ENCODE measurements at regions of chr20 and their contacts with region 1.

Region 1: DNA sequence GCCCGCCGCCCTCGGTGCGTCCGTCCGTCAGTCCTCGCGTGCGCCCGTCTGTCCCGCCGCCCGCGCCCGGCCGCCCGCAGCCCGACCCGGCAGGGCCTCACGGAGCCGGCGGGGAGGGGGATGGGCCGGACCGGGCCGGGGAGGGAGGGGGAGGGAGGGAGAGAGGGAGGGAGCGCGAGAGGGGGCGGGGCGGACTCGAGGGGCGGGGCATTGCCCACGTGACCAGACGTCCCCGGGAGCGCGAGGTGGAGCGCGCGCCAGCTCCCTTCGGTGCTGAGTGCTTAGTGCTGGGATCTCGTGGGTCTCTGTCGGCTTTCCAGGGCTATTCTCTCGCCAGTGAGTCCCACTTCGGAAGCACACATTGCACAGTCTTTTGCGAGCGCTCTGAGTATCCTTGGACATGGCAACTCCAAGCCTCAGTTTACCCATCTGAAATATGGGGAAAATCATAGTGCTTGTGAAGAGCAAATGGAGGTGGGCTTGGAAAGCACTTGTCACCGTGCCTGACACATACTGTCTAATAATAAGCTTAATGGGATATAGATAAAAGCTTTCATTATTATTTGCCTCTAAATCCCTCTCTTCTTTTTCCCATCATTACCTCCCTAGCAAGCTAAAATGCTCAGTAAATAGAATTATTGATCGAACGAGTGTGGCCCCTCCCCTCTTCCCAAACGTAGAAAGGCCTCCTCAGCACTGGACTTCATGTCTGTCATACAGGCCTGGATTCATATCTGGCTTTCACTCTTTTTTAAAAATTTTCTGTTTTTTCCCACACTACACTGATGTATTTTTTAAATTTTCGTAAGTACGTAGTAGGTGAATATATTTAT is at the start of gene NCOA6:
- DNase-seq: peak; percentile 68
- H3K4me3 Mint-ChIP-seq: peak within 1 kb of the TSS; percentile 97
- H3K27ac Mint-ChIP-seq: peak within 1 kb of the TSS; percentile 91
- H3K4me1 Mint-ChIP-seq: peaks cover 30% of the 10 kb centered on the region
- H3K27me3 Mint-ChIP-seq: peaks cover 13% of the 10 kb centered on the region
- total RNA-seq, gene NCOA6: 25.5 and 29.1 TPM in 2 replicates

Region 2: GRCh38 chr20:34516247-34517113 is 309.3 kb before region 1 on chr20 and contains the start of gene DYNLRB1:
- intact Hi-C with region 1: loop called (anchors 1 kb)
- DNase-seq: peak; percentile 93
- H3K4me3 Mint-ChIP-seq: peak within 1 kb of the TSS; percentile 95
- H3K27ac Mint-ChIP-seq: peak within 1 kb of the TSS; percentile 96
- H3K4me1 Mint-ChIP-seq: peaks cover 35% of the 10 kb centered on the region
- H3K27me3 Mint-ChIP-seq: no peaks in the 10 kb centered on the region
- total RNA-seq, gene DYNLRB1: 92.0 and 104 TPM in 2 replicates

Region 3: DNA sequence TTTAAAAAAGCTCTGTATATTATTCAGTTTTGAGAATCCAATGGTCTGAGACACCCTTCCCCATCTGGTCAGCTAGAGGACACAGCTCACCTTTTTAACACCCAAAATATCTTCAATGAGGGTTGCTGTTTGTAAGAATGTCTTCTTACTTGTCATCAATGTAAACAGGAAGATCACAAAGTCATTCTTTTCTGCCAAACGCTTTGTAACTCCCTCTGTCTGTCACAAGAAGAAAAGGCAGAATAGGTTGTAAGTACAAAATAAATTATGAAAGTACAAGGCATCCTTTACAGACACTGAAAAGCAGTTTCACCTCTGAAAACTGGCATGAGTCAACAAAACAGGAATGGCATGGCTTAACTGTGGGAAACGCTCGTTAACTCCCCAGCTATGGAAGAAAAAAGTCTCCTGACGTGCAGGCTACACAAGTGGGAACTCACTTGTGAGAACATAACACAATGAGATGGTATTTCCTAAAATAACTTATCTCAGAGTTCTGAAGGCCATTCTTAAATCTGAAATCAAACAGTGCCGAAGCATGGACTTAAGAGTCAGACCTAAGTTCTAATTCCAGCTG is 224.1 kb after region 1 on chr20:
- intact Hi-C with region 1: no loop called
- DNase-seq: no peak
- H3K4me3 Mint-ChIP-seq: no peak overlapping the region
- H3K27ac Mint-ChIP-seq: peak overlapping the region; percentile 40
- H3K4me1 Mint-ChIP-seq: peaks cover 5% of the 10 kb centered on the region
- H3K27me3 Mint-ChIP-seq: no peaks in the 10 kb centered on the region